Activated naive CD4-positive, alpha-beta T cell treated with anti-CD3 and anti-CD28 coated beads for 36 hours (primary cell): ENCODE measurements at regions of chr10 and their contacts with region 1.

Region 1: GRCh38 chr10:75401569-75402485 is at the start of gene ZNF503:
- DNase-seq: peak; percentile 67
- H3K4me3 Mint-ChIP-seq: peak within 1 kb of the TSS; percentile 77
- H3K27ac Mint-ChIP-seq: no peak within 1 kb of the TSS
- H3K4me1 Mint-ChIP-seq: peaks cover 25% of the 10 kb centered on the region
- H3K27me3 Mint-ChIP-seq: peaks cover 59% of the 10 kb centered on the region
- total RNA-seq, gene ZNF503: 0.07 to 0.21 TPM

Region 2: DNA sequence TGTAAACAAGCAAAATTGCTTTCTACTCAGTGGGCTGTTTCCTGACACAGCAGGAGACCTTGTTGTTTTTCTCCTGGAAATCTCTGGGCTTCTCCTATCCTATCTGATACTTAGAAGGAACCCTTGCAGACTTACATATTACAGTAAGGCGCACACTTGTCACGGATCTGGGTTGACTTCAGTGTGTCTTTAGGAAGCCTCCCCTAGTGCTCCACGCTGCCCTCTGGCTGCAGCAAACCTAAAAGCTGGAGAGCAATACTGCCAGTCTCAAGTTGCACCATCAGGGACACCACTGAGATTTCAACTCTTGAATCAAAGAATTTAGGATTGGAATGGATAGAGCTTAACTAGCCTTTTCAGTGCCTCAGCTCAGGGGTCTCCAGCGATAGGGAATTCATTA is 524.9 kb after region 1 on chr10:
- CTCF ChIA-PET with region 1: no interaction called
- intact Hi-C with region 1: loop called (anchors 5 kb)
- DNase-seq: peak; percentile 17
- H3K4me3 Mint-ChIP-seq: no peak overlapping the region
- H3K27ac Mint-ChIP-seq: no peak overlapping the region
- H3K4me1 Mint-ChIP-seq: no peaks in the 10 kb centered on the region
- H3K27me3 Mint-ChIP-seq: peaks cover 6% of the 10 kb centered on the region

Region 3: DNA sequence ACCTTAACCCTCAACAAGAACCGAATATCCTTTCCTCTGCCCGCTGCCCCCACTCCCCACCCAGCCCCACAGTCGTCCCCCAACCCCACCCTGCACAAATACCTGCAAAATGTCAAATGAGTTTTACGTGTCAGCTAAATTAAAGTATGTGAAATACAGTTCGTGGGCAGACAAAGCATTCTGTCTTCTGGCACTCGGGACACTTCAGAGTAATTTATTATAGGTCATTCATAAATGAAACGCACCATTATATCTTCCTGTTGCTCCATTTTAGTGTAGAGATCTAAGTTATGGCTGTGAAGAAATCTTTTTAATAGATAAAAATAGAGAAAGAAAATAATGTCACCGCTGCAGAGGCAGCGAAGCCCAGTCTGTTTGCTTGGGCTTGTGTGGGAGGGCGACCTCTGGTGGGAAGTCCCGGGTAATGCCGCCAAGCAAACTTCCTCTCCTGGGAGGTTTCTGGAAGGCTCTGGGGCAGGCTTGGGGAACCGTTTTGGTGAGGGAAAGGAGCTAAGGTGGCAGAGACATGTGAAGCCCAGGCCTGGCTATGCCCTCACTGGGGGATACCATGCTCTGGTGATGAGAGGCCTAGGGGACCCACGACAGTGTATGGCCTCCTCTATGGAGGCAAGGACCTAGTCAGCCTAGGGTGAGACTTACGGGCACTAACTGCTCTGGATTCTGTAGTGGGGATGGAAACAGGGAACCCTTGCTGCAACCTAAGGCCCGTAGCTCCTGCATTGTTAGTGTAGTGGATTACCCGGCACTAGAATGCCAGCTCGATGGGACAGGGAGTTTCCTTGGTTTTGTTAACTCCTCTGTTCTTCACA is 634.5 kb after region 1 on chr10:
- CTCF ChIA-PET with region 1: no interaction called
- intact Hi-C with region 1: loop called (anchors 1 kb)
- DNase-seq: peak; percentile 64
- H3K4me3 Mint-ChIP-seq: no peak overlapping the region
- H3K27ac Mint-ChIP-seq: no peak overlapping the region
- H3K4me1 Mint-ChIP-seq: no peaks in the 10 kb centered on the region
- H3K27me3 Mint-ChIP-seq: peaks cover 2% of the 10 kb centered on the region

Region 4: GRCh38 chr10:76051007-76051936 is 649.4 kb after region 1 on chr10:
- CTCF ChIA-PET with region 1: no interaction called
- intact Hi-C with region 1: no loop called
- DNase-seq: no peak
- H3K4me3 Mint-ChIP-seq: no peak overlapping the region
- H3K27ac Mint-ChIP-seq: no peak overlapping the region
- H3K4me1 Mint-ChIP-seq: no peaks in the 10 kb centered on the region
- H3K27me3 Mint-ChIP-seq: peaks cover 2% of the 10 kb centered on the region

Region 5: DNA sequence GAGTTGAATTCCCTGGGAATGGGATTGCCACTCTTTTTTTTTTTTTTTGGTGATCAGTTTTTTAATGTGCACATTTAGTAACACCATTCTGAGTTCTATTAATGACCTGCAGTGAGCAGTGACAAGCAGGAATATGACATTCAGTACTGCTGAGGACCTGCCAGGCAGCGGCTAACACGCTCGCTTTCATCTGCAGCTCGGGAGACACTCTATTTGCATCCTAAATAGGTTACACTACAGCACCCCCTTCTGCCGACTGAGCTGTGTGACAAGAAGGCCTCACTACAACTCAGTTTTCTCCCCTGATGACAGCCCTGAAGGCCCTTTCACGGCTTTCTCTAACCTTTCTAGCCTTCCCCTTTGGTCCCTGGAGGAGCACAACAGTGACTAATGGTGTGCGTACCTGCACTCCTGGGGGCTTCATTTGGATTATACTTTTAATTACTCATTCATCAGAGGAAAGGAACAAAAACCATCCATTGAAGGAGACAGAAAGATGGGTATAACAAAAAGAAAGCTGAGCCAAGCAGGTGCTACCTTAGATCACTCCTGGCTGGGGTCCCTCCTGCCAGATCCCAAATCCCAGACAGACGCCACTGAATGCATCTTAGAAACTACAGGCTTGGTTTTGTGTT is 902.0 kb after region 1 on chr10:
- CTCF ChIA-PET with region 1: no interaction called
- intact Hi-C with region 1: loop called (anchors 2 kb)
- DNase-seq: peak; percentile 42
- H3K4me3 Mint-ChIP-seq: no peak overlapping the region
- H3K27ac Mint-ChIP-seq: no peak overlapping the region
- H3K4me1 Mint-ChIP-seq: no peaks in the 10 kb centered on the region
- H3K27me3 Mint-ChIP-seq: peaks cover 4% of the 10 kb centered on the region